WTC11 (cell line): ENCODE measurements at regions of chr9 and their contacts with region 1.

Region 1: GRCh38 chr9:114906908-114907571 is 23.4 kb downstream of the TNFSF8 start:
- DNase-seq: peak; percentile 74
- ATAC-seq: peak; percentile 89
- H3K4me3 Mint-ChIP-seq: no peak overlapping the region
- H3K27ac Mint-ChIP-seq: no peak overlapping the region
- H3K4me1 Mint-ChIP-seq: peaks cover 24% of the 10 kb centered on the region
- H3K27me3 Mint-ChIP-seq: peaks cover 36% of the 10 kb centered on the region
- CTCF ChIP-seq: 0 out of 2 replicates have a peak, but pooled peaks have one; percentile 42

Region 2: GRCh38 chr9:114681594-114682332 is 225.3 kb before region 1 on chr9 and contains the start of gene TEX48:
- CTCF ChIA-PET with region 1: interaction called, 39 read pairs
- POLR2A ChIA-PET with region 1: no interaction called
- DNase-seq: peak; percentile 75
- ATAC-seq: peak; percentile 95
- H3K4me3 Mint-ChIP-seq: no peak within 1 kb of the TSS
- H3K27ac Mint-ChIP-seq: 0 out of 2 replicates have a peak within 1 kb of the TSS, but pooled peaks have one; percentile 57
- H3K4me1 Mint-ChIP-seq: no peaks in the 10 kb centered on the region; the same call in 1 of the 2 replicates
- H3K27me3 Mint-ChIP-seq: 0 out of 2 replicates have a peak, but pooled peaks cover 4% of the 10 kb centered on the region
- CTCF ChIP-seq: peak; percentile 63
- total RNA-seq, gene TEX48: not detected in 3 replicates

Region 3: DNA sequence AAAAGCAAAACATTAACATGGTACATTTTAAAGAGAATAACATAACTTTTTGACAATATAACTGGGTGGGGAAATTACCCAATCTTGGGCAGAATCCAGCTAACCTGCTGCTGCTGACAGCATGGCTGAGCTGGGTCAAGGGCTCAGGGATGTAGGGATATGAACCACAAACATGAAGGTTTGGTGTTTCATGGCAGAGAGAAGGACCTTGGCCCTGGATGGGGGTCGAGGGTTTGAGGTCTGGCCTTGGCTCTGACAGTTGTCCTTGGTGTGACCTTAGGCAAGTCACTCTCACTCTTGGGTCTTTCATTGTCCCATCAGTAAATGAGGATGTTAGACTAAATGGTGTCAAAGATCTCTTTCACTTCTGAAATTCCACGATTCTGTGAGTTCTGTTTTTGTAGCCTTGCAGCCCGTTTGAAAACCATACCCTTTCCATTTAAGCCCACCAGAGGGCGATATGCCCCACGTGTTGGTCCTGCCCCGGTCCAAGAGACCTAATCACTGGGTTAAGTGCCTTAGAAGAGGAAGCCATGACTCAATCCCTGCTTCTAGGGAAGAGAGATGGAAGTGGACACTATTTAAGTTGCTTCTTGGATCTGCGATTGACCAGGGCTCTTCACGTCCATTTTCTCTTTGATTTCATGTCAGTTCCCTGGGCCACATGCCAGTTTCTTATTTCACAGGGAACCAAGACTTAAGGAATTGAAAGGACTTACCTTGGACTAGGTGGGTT is 168.3 kb before region 1 on chr9:
- CTCF ChIA-PET with region 1: interaction called, 67 read pairs
- POLR2A ChIA-PET with region 1: no interaction called
- DNase-seq: peak; percentile 67
- ATAC-seq: peak; percentile 88
- H3K4me3 Mint-ChIP-seq: no peak overlapping the region
- H3K27ac Mint-ChIP-seq: 0 out of 2 replicates have a peak overlapping the region, but pooled peaks have one; percentile 22
- H3K4me1 Mint-ChIP-seq: no peaks in the 10 kb centered on the region
- H3K27me3 Mint-ChIP-seq: peaks cover 18% of the 10 kb centered on the region
- CTCF ChIP-seq: peak; percentile 72

Region 4: DNA sequence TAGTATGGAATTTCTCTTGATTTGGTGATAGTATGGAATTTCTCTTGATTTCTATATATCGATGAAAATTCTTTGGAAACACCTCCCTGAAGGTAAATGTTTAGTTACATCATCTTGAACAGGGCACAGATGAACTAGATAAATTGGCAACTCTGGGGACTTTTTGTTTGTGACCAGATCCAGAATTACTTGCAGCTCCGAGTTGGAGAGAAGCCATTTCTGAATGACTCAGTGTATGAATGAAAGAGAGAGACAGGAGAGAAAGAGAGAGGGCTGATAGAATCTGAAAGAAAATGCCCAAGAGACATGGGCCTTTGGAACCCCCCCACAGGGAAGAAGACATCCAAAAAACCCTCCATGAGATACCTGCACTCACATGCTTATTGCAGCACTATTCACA is 115.3 kb before region 1 on chr9:
- CTCF ChIA-PET with region 1: no interaction called
- POLR2A ChIA-PET with region 1: no interaction called
- DNase-seq: no peak
- ATAC-seq: no peak
- H3K4me3 Mint-ChIP-seq: no peak overlapping the region
- H3K27ac Mint-ChIP-seq: no peak overlapping the region
- H3K4me1 Mint-ChIP-seq: no peaks in the 10 kb centered on the region
- H3K27me3 Mint-ChIP-seq: peaks cover 16% of the 10 kb centered on the region
- CTCF ChIP-seq: no peak

Region 5: GRCh38 chr9:114805670-114806525 is 101.1 kb before region 1 on chr9 and contains the start of gene TNFSF15:
- CTCF ChIA-PET with region 1: interaction called, 11 read pairs
- POLR2A ChIA-PET with region 1: no interaction called
- DNase-seq: peak; percentile 49
- ATAC-seq: peak; percentile 93
- H3K4me3 Mint-ChIP-seq: peak within 1 kb of the TSS; percentile 41
- H3K27ac Mint-ChIP-seq: no peak within 1 kb of the TSS
- H3K4me1 Mint-ChIP-seq: peaks cover 30% of the 10 kb centered on the region
- H3K27me3 Mint-ChIP-seq: no peaks in the 10 kb centered on the region; the same call in none of the 2 replicates
- CTCF ChIP-seq: no peak
- total RNA-seq, gene TNFSF15: 0.09 to 0.11 TPM (median 0.09 TPM) in 3 replicates